ENCODE measurements at regions of chr3 and their contacts with region 1.

Region 1: DNA sequence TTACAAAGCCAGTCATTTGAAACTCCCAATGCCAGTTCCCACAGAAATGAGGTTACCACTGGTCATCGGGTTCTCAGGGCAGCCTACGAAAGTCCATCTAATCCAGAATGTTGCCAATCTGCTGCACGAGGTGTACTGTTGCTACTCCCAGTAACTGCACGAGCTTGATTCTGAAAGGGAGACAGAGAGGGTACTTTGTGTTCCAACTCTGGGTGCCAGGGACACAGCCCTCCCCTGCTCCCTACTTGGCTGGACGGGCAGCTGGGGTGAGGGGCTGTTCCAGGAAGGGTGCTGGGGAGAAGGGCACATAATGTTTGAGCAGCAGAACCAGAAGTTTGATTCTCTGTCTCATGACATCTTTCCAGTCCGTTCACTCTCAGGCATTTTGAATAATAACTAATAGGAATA is 27.1 kb upstream of the OSBPL11 start:
- DNase-seq: no peak
- ATAC-seq: no peak
- H3K4me3 ChIP-seq: no peak overlapping the region
- H3K27ac ChIP-seq: no peak overlapping the region
- H3K4me1 ChIP-seq: peaks cover 5% of the 10 kb centered on the region
- H3K27me3 ChIP-seq: peaks cover 9% of the 10 kb centered on the region
- CTCF ChIP-seq: no peak
- POLR2A ChIP-seq: no peak
- RAD21 ChIP-seq: no peak

Region 2: DNA sequence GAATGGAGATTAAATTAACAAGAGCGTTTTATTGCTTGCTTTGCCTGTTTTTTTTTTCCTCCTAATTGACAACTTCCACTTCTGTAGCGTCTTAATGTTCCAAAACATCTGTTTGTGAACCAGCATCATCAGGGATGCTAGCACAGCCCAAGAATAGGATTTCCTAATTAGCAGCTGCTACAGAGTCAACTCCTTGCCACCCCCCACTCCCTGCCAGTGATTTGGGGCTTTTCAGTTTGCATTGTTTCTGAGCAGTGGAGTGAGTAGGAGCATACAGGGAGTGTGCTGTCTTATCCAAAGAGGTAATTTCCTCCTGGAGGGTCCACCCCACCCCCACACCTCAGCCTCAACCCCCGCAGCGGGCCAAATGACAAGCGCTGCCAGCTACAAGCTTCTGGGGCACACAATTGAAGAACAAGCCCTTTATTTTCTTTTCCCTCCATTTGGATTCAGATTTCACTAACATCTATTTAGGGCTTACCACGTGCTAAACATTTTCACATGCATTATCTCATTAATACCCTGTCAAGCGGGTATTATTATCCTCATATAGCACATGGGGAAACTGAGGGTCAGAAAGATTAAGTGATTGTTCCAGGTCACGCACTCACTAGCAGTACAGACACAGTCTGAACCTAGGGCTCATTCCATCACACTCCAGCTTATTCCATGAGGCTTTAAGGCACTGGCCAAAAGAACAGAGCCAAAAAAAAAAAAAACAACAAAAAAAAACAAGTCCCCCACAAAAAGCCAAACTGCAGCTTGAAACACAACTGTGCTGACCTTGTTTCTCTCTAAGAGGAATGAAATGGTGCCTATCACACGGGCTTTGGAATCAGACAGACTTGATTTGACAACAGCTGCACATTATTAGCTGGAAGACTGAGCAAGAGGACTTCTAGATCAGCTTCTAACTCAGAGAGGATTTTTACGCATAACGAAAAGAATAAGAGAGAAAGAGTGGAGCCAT is 583.0 kb before region 1 on chr3:
- CTCF ChIA-PET with region 1: no interaction called
- POLR2A ChIA-PET with region 1: interaction called, 14 read pairs
- dilution Hi-C with region 1: no loop called
- in situ Hi-C with region 1: no loop called
- intact Hi-C with region 1: no loop called
- DNase-seq: no peak
- ATAC-seq: no peak
- H3K4me3 ChIP-seq: no peak overlapping the region
- H3K27ac ChIP-seq: no peak overlapping the region
- H3K4me1 ChIP-seq: peaks cover 31% of the 10 kb centered on the region
- H3K27me3 ChIP-seq: no peaks in the 10 kb centered on the region
- CTCF ChIP-seq: no peak
- POLR2A ChIP-seq: no peak
- RAD21 ChIP-seq: no peak

Region 3: DNA sequence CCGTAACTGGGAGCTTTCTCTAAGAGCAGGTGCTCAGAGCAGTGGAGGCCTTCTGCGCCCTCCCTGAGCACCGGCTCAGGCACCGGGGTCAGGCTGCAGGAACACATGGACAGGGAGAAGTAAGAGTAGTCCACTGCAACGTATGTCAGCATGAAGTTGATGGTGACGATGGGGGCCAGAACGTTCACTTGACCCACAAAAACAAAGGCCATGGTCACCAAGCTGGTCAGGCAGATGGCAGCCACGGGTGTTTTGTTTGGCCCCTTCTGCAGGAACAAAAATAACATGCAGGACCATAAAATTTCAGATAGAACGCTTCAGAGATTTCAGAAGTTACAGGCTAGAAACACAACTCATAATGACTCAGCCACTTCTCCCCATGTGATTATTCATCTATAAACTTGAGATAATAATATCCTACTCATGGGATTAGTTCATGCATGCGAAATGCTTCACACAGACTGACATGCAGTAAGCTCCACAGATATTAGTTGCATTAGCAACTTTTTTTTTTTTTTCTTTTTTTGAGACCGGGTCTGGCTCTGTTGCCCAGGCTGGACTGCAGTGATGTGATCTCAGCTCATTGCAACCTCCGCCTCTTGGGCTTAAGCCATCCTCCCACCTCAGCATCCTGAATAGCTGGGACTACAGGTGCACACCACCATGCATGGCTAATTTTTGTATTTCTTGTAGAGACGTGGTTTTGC is 514.4 kb before region 1 on chr3:
- CTCF ChIA-PET with region 1: no interaction called
- POLR2A ChIA-PET with region 1: no interaction called
- dilution Hi-C with region 1: no loop called
- in situ Hi-C with region 1: no loop called
- intact Hi-C with region 1: no loop called
- DNase-seq: peak; percentile 95
- ATAC-seq: peak; percentile 53
- H3K4me3 ChIP-seq: no peak overlapping the region
- H3K27ac ChIP-seq: peak overlapping the region; percentile 71
- H3K4me1 ChIP-seq: peaks cover 40% of the 10 kb centered on the region
- H3K27me3 ChIP-seq: no peaks in the 10 kb centered on the region
- CTCF ChIP-seq: no peak
- POLR2A ChIP-seq: no peak
- RAD21 ChIP-seq: no peak

Region 4: GRCh38 chr3:125496701-125497100 is 125.7 kb before region 1 on chr3:
- CTCF ChIA-PET with region 1: no interaction called
- POLR2A ChIA-PET with region 1: no interaction called
- dilution Hi-C with region 1: no loop called
- in situ Hi-C with region 1: no loop called
- intact Hi-C with region 1: no loop called
- DNase-seq: no peak
- ATAC-seq: no peak
- H3K4me3 ChIP-seq: no peak overlapping the region
- H3K27ac ChIP-seq: no peak overlapping the region
- H3K4me1 ChIP-seq: no peaks in the 10 kb centered on the region
- H3K27me3 ChIP-seq: no peaks in the 10 kb centered on the region
- CTCF ChIP-seq: no peak
- POLR2A ChIP-seq: no peak
- RAD21 ChIP-seq: no peak

Region 5: DNA sequence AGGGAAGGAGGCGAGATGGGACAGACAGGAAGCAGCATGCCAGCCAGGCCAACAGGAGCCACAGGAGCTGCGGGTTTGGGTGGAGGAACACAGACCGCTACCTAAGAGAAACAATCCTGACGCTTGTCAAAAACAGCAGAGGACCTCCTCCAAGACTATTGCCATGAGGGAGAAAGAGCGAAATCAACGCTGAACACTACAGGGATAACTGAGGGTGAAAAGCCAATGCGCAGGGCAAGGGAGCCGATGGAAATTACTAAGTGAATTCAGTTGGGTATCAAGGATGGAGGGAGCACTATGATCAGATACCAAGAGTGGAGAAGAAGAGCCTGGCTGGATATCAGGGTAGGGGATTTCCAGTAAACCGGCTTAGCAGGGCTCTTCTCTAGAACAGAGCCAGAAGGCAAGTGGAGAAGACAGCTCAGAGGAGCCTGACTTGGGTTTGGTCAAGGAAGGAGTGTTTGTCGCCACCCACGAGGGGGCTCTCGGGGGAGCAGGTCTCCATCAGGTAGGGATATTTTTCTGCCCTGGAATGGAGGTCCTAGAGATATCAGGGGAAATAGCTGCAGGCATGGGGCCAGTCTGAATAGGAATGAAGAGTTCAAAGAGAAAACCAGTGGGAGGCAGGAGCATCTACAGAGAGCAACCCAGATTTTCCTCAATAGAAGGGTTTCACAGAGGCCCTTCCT is 413.1 kb after region 1 on chr3:
- CTCF ChIA-PET with region 1: no interaction called
- POLR2A ChIA-PET with region 1: no interaction called
- dilution Hi-C with region 1: no loop called
- in situ Hi-C with region 1: no loop called
- intact Hi-C with region 1: no loop called
- DNase-seq: no peak
- ATAC-seq: no peak
- H3K4me3 ChIP-seq: no peak overlapping the region
- H3K27ac ChIP-seq: no peak overlapping the region
- H3K4me1 ChIP-seq: no peaks in the 10 kb centered on the region
- H3K27me3 ChIP-seq: no peaks in the 10 kb centered on the region
- CTCF ChIP-seq: no peak
- POLR2A ChIP-seq: no peak
- RAD21 ChIP-seq: no peak

Measured in IMR-90 (cell line).